Cardiac septum (tissue), 1 donor: ENCODE measurements at regions of chr6 and their contacts with region 1.

Region 1: DNA sequence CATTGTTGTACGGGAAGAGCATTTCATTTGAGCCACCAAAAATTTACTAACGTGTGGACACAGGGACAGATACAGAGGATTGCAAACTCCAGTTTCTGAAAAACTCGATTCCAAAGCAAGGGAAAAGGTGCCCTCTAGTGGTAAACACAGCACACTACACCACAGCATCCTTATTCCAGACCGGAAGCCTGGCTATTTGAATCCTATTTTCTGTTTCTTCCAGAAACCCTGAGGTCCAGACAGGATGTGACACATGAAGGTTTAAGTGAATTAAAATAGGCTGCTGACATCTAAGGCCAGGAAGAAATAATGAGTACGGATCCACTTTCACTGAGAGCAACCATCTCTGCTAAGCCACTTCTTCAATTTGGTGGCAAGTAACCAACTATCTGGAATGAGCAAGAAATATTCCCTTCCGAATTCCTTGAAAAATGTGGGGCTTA is 31.8 kb upstream of the GMPR start:
- DNase-seq: no peak

Region 2: GRCh38 chr6:15299430-15300131 is 907.0 kb before region 1 on chr6:
- intact Hi-C with region 1: no loop called
- DNase-seq: peak; percentile 80

Region 3: GRCh38 chr6:15512126-15512525 is 694.5 kb before region 1 on chr6:
- intact Hi-C with region 1: loop called (anchors 10 kb)
- DNase-seq: no peak

Region 4: GRCh38 chr6:15691250-15691869 is 515.3 kb before region 1 on chr6:
- intact Hi-C with region 1: loop called (anchors 5 kb)
- DNase-seq: peak; percentile 92

Region 5: GRCh38 chr6:16031278-16031981 is 175.2 kb before region 1 on chr6:
- intact Hi-C with region 1: no loop called
- DNase-seq: no peak

Region 6: GRCh38 chr6:16249971-16250370 is 43.4 kb after region 1 on chr6:
- intact Hi-C with region 1: no loop called
- DNase-seq: no peak